Tibial artery (tissue), 4 donors: ENCODE measurements at regions of chr9 and their contacts with region 1.

Region 1: GRCh38 chr9:128933731-128934130 is 12.9 kb downstream of the PHYHD1 start:
- DNase-seq: peak in 1 of 2 donors; percentile 31
- H3K4me3 ChIP-seq: no peak overlapping the region
- H3K27ac ChIP-seq: no peak overlapping the region
- H3K4me1 ChIP-seq: no peaks in the 10 kb centered on the region
- H3K27me3 ChIP-seq: no peaks in the 10 kb centered on the region
- CTCF ChIP-seq: no peak

Region 2: GRCh38 chr9:128845155-128845931 is 88.4 kb before region 1 on chr9:
- intact Hi-C with region 1: loop called (anchors 5 kb)
- DNase-seq: no peak
- H3K4me3 ChIP-seq: no peak overlapping the region
- H3K27ac ChIP-seq: no peak overlapping the region
- H3K4me1 ChIP-seq: peaks cover 0 to 9% (median 0%) of the 10 kb centered on the region in 4 donors
- H3K27me3 ChIP-seq: no peaks in the 10 kb centered on the region
- CTCF ChIP-seq: no peak

Region 3: GRCh38 chr9:130352081-130352480 is 1418.3 kb after region 1 on chr9:
- intact Hi-C with region 1: no loop called
- DNase-seq: no peak
- H3K4me3 ChIP-seq: no peak overlapping the region
- H3K27ac ChIP-seq: no peak overlapping the region
- H3K4me1 ChIP-seq: no peaks in the 10 kb centered on the region
- H3K27me3 ChIP-seq: peaks cover 0 to 15% of the 10 kb centered on the region in 2 donors
- CTCF ChIP-seq: no peak